Caco-2 (cell line): ENCODE measurements at regions of chr17 and their contacts with region 1.

Region 1: GRCh38 chr17:45428050-45428617 is 4.5 kb downstream of the ARHGAP27 start:
- DNase-seq: peak; percentile 70 to 90
- H3K4me3 ChIP-seq: 0 out of 2 replicates have a peak overlapping the region, but pooled peaks have one; percentile 15
- H3K4me3 Mint-ChIP-seq: peak overlapping the region; percentile 58
- H3K27ac Mint-ChIP-seq: peak overlapping the region; percentile 57
- H3K4me1 ChIP-seq: 0 out of 2 replicates have a peak, but pooled peaks cover 7% of the 10 kb centered on the region
- H3K4me1 Mint-ChIP-seq: peaks cover 22% of the 10 kb centered on the region
- H3K27me3 ChIP-seq: no peaks in the 10 kb centered on the region
- H3K27me3 Mint-ChIP-seq: no peaks in the 10 kb centered on the region
- CTCF ChIP-seq: peak; percentile 93 to 99

Region 2: DNA sequence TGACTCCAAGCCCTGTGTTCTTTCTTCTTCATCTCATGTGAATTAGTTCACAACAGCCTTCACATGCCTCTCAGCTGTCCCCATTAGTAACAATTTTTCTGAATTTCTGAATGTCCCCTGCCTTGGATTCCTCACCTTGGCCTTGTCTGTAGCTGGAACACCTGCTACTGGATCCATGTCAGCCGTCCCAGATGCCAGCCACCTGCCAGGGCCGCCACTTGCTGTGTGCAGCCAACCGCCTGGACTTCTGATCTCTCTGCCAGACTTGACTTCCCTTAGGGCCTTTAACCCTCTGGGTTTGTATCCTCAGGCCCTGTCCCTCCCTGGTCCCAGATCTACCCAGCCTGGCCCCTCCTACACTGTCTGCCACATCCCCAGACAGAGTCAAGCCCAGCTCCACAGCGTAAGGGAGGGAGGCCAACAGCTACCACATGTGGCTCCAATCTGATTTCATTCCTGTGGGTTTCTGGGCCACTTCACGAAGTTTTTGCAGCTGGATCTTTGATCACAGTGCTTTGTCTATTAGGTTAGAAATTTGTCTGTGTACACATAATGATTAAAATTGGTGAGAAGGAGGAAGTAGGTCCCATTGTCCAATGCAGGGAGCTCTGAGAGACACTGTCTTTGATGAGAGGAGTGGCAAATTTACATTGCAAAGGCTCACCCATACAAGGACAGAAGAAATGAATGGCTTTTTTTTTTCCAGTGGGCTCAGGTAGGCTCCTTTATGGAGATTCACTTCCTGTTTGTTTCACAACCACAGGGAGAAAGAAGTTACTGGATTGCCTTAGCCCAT is 1536.1 kb before region 1 on chr17:
- CTCF ChIA-PET with region 1: no interaction called
- POLR2A ChIA-PET with region 1: no interaction called
- intact Hi-C with region 1: no loop called
- DNase-seq: no peak
- H3K4me3 ChIP-seq: no peak overlapping the region
- H3K4me3 Mint-ChIP-seq: no peak overlapping the region
- H3K27ac Mint-ChIP-seq: no peak overlapping the region
- H3K4me1 ChIP-seq: no peaks in the 10 kb centered on the region
- H3K4me1 Mint-ChIP-seq: no peaks in the 10 kb centered on the region
- H3K27me3 ChIP-seq: no peaks in the 10 kb centered on the region
- H3K27me3 Mint-ChIP-seq: no peaks in the 10 kb centered on the region
- CTCF ChIP-seq: no peak

Region 3: GRCh38 chr17:45235416-45236281 is 192.5 kb before region 1 on chr17:
- CTCF ChIA-PET with region 1: interaction called, 6 read pairs
- POLR2A ChIA-PET with region 1: interaction called, 3 read pairs
- intact Hi-C with region 1: loop called (anchors 5 kb)
- DNase-seq: peak; percentile 72 to 77
- H3K4me3 ChIP-seq: no peak overlapping the region
- H3K4me3 Mint-ChIP-seq: no peak overlapping the region
- H3K27ac Mint-ChIP-seq: no peak overlapping the region
- H3K4me1 ChIP-seq: peaks cover 6% of the 10 kb centered on the region; the same call in 1 of the 2 replicates
- H3K4me1 Mint-ChIP-seq: no peaks in the 10 kb centered on the region
- H3K27me3 ChIP-seq: no peaks in the 10 kb centered on the region
- H3K27me3 Mint-ChIP-seq: peaks cover 4% of the 10 kb centered on the region
- CTCF ChIP-seq: peak; percentile 82 to 86

Region 4: GRCh38 chr17:45277216-45277849 is 150.8 kb before region 1 on chr17:
- CTCF ChIA-PET with region 1: interaction called, 15 read pairs
- POLR2A ChIA-PET with region 1: no interaction called
- intact Hi-C with region 1: loop called (anchors 1 kb)
- DNase-seq: peak; percentile 94 to 95
- H3K4me3 ChIP-seq: no peak overlapping the region
- H3K4me3 Mint-ChIP-seq: peak overlapping the region; percentile 41
- H3K27ac Mint-ChIP-seq: peak overlapping the region; percentile 61
- H3K4me1 ChIP-seq: peaks cover 11% of the 10 kb centered on the region
- H3K4me1 Mint-ChIP-seq: peaks cover 12% of the 10 kb centered on the region
- H3K27me3 ChIP-seq: no peaks in the 10 kb centered on the region
- H3K27me3 Mint-ChIP-seq: no peaks in the 10 kb centered on the region
- CTCF ChIP-seq: peak; percentile 88 to 96

Region 5: GRCh38 chr17:45353043-45353442 is 75.1 kb before region 1 on chr17:
- CTCF ChIA-PET with region 1: no interaction called
- POLR2A ChIA-PET with region 1: no interaction called
- intact Hi-C with region 1: no loop called
- DNase-seq: peak in 1 of 2 experiments; percentile 4
- H3K4me3 ChIP-seq: no peak overlapping the region
- H3K4me3 Mint-ChIP-seq: no peak overlapping the region
- H3K27ac Mint-ChIP-seq: no peak overlapping the region
- H3K4me1 ChIP-seq: peaks cover 17% of the 10 kb centered on the region
- H3K4me1 Mint-ChIP-seq: peaks cover 19% of the 10 kb centered on the region
- H3K27me3 ChIP-seq: no peaks in the 10 kb centered on the region
- H3K27me3 Mint-ChIP-seq: no peaks in the 10 kb centered on the region
- CTCF ChIP-seq: no peak

Region 6: DNA sequence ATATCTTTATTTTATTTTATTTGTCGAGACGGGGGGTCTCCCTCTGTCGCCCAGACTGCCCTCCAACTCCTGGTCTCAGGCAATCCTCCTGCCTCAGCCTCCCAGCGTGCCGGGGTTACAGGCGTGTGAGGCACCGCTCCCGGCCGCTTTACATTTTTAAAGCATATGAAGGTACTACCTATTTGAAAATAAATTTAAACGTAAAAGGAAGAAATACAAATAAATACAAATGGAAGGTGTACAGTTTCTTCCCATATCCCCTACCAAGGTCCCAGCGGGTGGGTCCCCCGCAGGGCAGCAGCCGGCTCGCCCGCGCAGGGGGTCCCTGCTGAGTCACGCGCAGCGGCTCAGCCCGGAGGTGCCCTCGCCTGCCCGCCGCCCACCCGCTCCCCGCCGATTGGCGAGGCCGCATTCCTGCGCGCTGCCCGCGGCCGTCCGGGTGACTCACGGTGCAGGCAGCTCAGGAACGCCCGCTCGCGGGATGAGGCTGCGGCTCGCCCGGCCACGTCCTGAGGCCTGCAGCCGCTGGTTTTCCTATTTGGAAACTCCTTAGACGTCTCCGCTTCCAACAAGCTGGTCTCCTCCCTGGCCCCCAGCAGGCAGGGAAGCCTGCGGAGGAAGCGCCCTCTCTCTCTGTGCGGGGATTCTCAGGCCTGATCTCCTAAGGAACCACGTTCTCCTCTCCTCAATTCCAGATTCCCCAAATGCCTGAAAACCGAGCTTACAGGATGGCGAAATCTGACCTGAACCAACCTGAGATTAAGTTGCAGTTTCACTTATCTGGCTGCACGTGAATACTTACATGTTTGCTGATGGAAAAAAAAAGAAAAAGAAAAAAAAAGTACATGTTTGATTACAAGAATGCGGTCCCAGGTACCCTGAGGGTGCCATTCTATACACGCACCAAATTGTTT is 56.5 kb before region 1 on chr17:
- CTCF ChIA-PET with region 1: interaction called, 4 read pairs
- POLR2A ChIA-PET with region 1: interaction called, 10 read pairs
- intact Hi-C with region 1: no loop called
- DNase-seq: peak; percentile 95 to 96
- H3K4me3 ChIP-seq: peak overlapping the region; percentile 35
- H3K4me3 Mint-ChIP-seq: peak overlapping the region; percentile 74
- H3K27ac Mint-ChIP-seq: peak overlapping the region; percentile 96
- H3K4me1 ChIP-seq: peaks cover 39% of the 10 kb centered on the region
- H3K4me1 Mint-ChIP-seq: peaks cover 27% of the 10 kb centered on the region
- H3K27me3 ChIP-seq: no peaks in the 10 kb centered on the region
- H3K27me3 Mint-ChIP-seq: no peaks in the 10 kb centered on the region
- CTCF ChIP-seq: no peak

Region 7: GRCh38 chr17:45394913-45395568 is 33.1 kb before region 1 on chr17:
- CTCF ChIA-PET with region 1: interaction called, 105 read pairs
- POLR2A ChIA-PET with region 1: no interaction called
- intact Hi-C with region 1: loop called (anchors 1 kb)
- DNase-seq: peak; percentile 69 to 79
- H3K4me3 ChIP-seq: no peak overlapping the region
- H3K4me3 Mint-ChIP-seq: no peak overlapping the region
- H3K27ac Mint-ChIP-seq: no peak overlapping the region
- H3K4me1 ChIP-seq: no peaks in the 10 kb centered on the region
- H3K4me1 Mint-ChIP-seq: no peaks in the 10 kb centered on the region
- H3K27me3 ChIP-seq: no peaks in the 10 kb centered on the region
- H3K27me3 Mint-ChIP-seq: no peaks in the 10 kb centered on the region
- CTCF ChIP-seq: peak; percentile 78 to 89

Region 8: GRCh38 chr17:45413498-45413923 is 14.6 kb before region 1 on chr17:
- CTCF ChIA-PET with region 1: interaction called, 16 read pairs
- POLR2A ChIA-PET with region 1: interaction called, 4 read pairs
- intact Hi-C with region 1: loop called (anchors 2 kb)
- DNase-seq: no peak
- H3K4me3 ChIP-seq: no peak overlapping the region
- H3K4me3 Mint-ChIP-seq: no peak overlapping the region
- H3K27ac Mint-ChIP-seq: no peak overlapping the region
- H3K4me1 ChIP-seq: peaks cover 20% of the 10 kb centered on the region
- H3K4me1 Mint-ChIP-seq: peaks cover 15% of the 10 kb centered on the region
- H3K27me3 ChIP-seq: no peaks in the 10 kb centered on the region
- H3K27me3 Mint-ChIP-seq: no peaks in the 10 kb centered on the region
- CTCF ChIP-seq: no peak